HCT116 (cell line): ENCODE measurements at regions of chr12 and their contacts with region 1.

Region 1: GRCh38 chr12:12724661-12725545 is 7.7 kb downstream of the CDKN1B start:
- DNase-seq: peak; percentile 98
- ATAC-seq: peak; percentile 67
- H3K4me3 ChIP-seq: peak overlapping the region; percentile 62 to 81
- H3K27ac ChIP-seq: peak overlapping the region; percentile 100
- H3K4me1 ChIP-seq: peaks cover 27 to 33% of the 10 kb centered on the region in 2 experiments
- H3K27me3 ChIP-seq: no peaks in the 10 kb centered on the region
- CTCF ChIP-seq: no peak
- POLR2A ChIP-seq: peak; percentile 73
- RAD21 ChIP-seq: no peak

Region 2: GRCh38 chr12:12736759-12737676 is 12.1 kb after region 1 on chr12:
- CTCF ChIA-PET with region 1: interaction called, 29 read pairs
- POLR2A ChIA-PET with region 1: interaction called, 7 read pairs
- RAD21 ChIA-PET with region 1: interaction called, 3 to 4 read pairs
- intact Hi-C with region 1: no loop called
- DNase-seq: no peak
- ATAC-seq: peak; percentile 89
- H3K4me3 ChIP-seq: no peak overlapping the region
- H3K27ac ChIP-seq: no peak overlapping the region
- H3K4me1 ChIP-seq: peaks cover 0 to 10% of the 10 kb centered on the region in 2 experiments; a peak in 2 of 4 replicates
- H3K27me3 ChIP-seq: no peaks in the 10 kb centered on the region
- CTCF ChIP-seq: peak; percentile 40 to 68 (median 59); a peak in 5 of 6 replicates
- POLR2A ChIP-seq: no peak
- RAD21 ChIP-seq: peak; percentile 59